Lower leg skin (tissue), 4 donors: ENCODE measurements at regions of chr2 and their contacts with region 1.

Region 1: DNA sequence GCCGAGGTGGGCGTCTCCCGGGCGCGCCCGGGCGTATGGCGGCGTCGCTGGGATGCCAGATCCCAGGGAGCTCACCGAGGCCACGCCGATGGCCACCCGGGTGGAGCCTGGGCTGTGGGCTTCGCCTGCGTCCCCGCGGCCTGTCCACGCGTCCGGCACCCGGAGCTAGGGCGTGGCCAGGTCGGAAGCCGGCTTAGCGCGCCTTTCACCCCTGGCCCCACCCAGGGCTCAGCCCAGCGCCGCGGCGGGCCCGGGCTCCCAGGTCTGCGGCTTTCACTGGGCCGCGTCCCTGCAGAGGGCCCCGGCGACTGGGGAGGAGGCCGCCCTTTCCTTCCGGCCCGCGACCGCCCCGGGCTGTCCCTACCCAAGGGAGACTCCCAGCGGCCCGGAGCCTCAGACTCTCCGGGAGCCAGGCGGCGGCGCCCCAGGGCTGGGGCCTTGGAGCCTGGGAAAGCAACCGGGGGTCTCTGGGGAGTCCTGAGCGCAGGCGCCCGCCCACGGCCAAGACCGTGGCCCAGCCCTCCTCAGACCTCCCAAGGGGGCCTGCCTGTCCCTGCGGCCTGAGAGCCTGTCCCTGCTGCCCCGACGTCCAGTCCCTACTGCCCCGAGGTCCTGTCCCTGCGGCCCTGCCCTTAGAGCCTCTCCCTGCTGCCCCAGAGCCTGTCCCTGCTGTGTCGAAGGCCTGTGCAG is 36.3 kb upstream of the ITM2C start:
- DNase-seq: no peak
- H3K4me3 ChIP-seq: no peak overlapping the region
- CTCF ChIP-seq: no peak
- POLR2A ChIP-seq: no peak

Region 2: DNA sequence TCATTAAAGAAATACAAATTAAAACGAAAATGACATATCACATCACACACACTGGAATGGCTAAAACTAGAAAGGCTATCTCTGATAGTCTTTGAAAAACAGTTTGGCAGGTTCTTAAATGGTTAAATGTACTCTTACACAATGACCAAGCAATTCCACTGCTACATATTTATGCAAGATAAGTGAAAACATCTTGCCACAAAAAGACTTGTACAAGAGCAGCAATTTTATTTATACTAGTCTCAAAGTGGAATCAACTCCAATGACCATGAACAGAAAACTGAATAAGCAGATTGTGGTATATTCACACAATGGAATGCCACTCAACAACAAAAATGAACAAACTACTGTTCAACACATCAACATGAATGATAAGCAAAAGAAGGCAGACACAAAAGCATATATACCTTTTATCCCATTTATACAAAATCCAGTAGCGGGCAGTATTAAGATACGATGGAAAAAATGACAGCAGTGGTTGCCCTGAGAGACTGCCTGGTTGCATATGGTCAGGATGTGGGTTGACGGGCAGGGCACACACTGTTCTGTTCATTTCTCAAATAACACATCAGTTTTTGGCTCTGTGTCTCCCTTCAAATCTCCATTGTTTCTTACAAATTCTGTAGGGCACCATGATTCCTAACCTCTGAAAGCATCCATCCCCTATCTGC is 387.1 kb before region 1 on chr2:
- intact Hi-C with region 1: no loop called
- DNase-seq: no peak
- H3K4me3 ChIP-seq: no peak overlapping the region
- CTCF ChIP-seq: no peak
- POLR2A ChIP-seq: no peak

Region 3: DNA sequence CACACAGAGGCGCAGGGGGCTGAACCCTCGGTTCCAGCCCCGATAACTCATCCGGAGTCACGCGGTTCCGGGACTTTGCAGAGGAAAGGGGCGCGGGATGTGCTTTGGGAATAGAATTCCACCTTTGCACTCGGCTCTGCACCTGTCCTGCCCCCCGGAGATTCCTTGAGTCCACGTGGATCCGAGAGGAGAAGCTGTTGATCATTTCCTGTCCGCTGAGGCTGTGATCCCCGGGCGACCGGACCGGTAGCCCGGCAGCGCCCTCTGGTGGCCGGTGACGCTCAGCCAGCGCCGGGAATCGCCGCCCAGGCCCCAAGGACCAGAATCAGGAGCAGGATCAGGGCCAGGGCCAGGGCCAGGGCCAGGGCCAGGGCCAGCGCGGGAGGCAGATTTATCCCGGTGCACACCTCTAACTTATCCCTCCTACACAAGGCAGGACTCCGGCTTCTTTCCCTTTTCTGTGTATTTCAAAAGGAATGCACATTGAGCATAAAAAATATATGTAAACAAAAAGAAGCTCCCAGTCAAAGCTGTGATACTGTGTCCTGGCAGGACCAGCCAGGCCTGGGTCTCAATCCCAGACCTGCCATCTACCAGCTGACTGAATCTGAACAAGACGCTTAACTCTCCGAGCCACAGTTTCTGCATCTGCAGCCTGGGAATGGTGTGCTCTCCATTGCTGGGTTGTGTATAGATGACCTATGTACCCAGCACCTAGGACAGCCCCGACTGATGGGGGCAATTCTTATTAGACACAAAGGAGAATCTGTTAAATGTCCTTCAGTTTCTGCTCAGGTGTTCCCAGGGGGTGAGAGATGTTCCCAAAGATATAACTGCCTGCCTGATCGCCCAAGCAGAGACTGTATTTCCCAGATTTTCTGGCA is 159.0 kb after region 1 on chr2:
- intact Hi-C with region 1: loop called (anchors 5 kb)
- DNase-seq: peak; percentile 47 to 96
- H3K4me3 ChIP-seq: no peak overlapping the region
- CTCF ChIP-seq: no peak
- POLR2A ChIP-seq: no peak